ENCODE measurements at regions of chr2 and their contacts with region 1.

Region 1: DNA sequence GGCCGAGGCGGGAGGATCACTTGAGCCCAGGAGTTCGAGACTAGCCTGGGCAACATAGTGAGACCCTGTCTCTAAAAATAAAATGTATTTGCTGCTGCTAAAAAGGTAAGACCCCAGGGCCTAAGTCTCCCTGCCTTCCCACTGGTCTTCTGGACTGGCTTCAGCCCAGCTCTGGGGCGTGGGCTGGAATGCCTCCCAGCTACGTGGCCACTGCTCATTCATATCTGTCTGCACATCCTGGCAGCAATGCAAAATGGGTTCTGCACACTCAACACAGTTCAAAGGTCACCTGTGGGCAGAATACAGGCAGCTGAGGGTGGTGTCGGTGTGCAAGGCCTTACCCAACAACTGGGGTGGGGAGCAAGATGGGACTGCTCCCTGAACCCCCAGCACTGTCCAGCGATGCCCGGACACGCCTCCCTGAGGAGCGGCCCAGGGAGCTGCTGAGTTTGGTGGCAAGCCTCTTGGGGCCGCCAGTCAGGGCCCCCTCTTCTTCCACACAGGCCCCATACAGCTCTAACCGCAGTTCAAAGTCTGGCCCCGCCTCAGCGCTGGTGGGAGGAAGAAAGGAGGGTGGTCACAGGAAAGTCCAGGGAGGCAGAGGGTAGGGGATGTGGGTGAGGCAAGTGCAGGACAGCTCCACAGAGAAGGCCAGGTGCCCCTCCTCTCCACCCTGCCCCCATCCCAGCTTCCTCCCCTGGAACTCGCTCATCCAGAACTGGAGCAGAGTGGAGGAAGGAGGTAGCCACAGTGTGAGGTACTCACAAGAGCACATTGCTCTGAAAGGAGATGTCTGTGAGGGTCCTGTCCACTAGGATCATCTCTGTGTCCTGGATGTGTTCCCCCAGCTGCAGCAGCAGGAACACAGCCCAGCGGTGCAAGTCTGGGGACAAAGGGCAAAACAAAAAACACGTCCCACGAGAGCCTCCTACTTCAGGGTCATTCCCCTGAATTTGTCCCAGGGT is 8.2 kb downstream of the WDR54 start:
- DNase-seq: no peak
- CTCF ChIP-seq: no peak

Region 2: DNA sequence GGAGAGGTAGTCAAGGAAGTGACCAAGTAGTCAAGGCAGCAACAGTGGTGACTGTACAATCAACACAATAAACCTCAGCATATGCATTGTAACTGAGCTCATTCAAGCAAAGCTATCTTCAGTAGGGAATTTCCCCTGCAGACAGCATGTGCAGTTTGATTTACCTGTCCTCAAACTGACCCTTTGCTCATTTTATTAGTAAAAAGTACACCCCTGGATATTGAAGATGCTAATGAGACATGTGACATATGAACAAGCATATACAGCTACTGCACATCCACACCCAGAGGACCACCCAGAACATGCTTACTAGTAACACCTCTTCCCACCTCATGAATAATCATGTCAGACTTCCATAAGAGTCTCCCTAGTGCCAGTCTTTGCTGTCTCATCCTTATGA is 23.7 kb before region 1 on chr2:
- CTCF ChIA-PET with region 1: no interaction called
- POLR2A ChIA-PET with region 1: no interaction called
- DNase-seq: peak; percentile 44
- CTCF ChIP-seq: no peak

Region 3: DNA sequence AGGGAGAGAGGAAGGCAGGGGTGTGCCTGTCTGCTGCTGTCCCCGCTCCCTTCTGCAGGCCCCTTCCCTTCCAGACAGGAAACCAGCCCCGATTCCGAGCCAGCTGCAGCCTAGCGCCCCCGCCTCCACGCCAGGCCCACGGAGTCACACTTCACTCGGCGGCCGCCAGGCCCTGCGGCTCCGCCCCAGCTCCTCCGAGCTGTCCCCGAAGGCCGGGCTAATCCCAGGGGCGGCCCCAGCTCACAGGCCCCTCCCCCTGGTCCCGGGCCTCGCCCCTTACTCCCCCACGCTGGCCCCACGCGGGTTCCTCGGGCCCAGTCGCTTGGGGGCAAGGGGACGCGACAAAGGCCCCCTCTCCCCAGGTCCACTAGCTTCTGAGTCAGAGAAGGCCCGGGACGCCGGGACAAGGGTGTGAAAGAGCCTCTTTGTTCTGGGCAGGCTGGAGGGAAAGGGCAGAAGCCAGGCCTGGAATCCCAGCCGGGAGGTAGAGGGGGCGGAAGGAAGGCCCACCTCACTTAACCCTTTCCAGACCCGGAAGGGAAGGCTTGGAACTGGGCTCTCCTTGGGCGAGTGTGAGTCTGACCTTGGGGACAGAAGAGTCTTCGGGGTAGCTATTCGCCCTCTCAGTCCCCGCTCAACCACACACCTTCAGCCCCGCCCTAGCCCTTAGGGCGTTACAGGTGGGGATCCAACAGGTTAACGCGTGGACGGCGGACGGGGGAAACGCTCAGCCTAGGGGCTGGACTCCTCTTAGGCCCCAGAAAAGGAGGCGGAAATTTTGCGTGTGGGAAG is 10.8 kb after region 1 on chr2:
- CTCF ChIA-PET with region 1: interaction called, 16 read pairs
- POLR2A ChIA-PET with region 1: no interaction called
- DNase-seq: peak; percentile 97
- CTCF ChIP-seq: peak; percentile 32